ENCODE measurements at regions of chr17 and their contacts with region 1.

Region 1: GRCh38 chr17:75904749-75905521 is at the start of gene MRPL38:
- DNase-seq: peak; percentile 96 to 98 (median 96)
- ATAC-seq: peak; percentile 96
- H3K4me3 ChIP-seq: peak within 1 kb of the TSS; percentile 84 to 91
- H3K27ac ChIP-seq: peak within 1 kb of the TSS; percentile 82 to 96 (median 92)
- H3K4me1 ChIP-seq: peaks cover 19% of the 10 kb centered on the region
- H3K27me3 ChIP-seq: no peaks in the 10 kb centered on the region
- CTCF ChIP-seq: peak; percentile 97 to 100 (median 99)
- POLR2A ChIP-seq: peak; percentile 67 to 85 (median 69)
- total RNA-seq, gene MRPL38: 47.7 to 77.8 TPM

Region 2: DNA sequence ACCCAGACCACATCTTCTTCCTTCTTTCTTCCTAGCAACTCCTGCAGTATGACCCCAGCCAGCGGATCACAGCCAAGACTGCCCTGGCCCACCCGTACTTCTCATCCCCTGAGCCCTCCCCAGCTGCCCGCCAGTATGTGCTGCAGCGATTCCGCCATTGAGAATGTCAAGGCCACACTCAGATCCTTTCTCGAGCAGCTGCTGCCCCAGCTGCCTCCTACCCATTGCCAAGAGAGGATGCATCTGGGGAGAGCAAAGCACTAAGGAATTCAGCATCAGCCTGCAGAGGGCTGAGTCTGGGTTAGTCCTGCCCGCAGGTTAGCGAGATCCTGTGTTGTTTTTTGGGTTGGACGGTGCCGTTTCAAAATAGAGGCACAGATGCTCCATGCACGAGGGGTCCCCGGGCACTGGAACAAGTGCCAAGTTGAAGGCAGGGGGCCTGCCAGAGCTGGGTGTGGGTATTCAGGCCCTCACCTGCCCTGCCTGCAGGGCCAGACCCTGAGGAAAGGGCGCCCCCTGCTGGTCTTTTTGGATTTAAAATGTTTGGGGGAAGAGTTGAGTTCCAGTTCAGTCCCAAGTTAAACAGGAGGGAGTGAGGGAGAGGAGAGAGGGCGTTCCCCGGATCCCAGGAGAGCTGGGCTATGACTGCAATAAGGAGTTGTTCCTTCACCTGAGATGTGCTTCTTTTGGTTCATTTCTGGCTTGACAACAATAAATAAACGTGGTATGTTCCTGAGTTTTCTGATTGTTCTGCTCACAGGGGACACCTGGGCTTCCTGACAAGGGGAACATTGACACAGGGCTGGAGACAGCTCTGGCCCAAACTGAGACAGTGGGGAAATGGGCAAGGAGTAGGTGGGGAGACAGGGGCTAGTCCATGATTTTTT is 100.6 kb after region 1 on chr17:
- intact Hi-C with region 1: loop called (anchors 5 kb)
- DNase-seq: peak; percentile 79 to 89 (median 85)
- ATAC-seq: peak; percentile 62
- H3K4me3 ChIP-seq: no peak overlapping the region
- H3K27ac ChIP-seq: peak overlapping the region; percentile 13 to 85 (median 52)
- H3K4me1 ChIP-seq: peaks cover 48% of the 10 kb centered on the region
- H3K27me3 ChIP-seq: no peaks in the 10 kb centered on the region
- CTCF ChIP-seq: peak; percentile 68 to 85 (median 80)
- POLR2A ChIP-seq: no peak

Region 3: GRCh38 chr17:76296186-76296585 is 391.3 kb after region 1 on chr17:
- intact Hi-C with region 1: loop called (anchors 10 kb)
- DNase-seq: no peak
- ATAC-seq: no peak
- H3K4me3 ChIP-seq: no peak overlapping the region
- H3K27ac ChIP-seq: no peak overlapping the region
- H3K4me1 ChIP-seq: no peaks in the 10 kb centered on the region
- H3K27me3 ChIP-seq: no peaks in the 10 kb centered on the region
- CTCF ChIP-seq: no peak
- POLR2A ChIP-seq: no peak

Measured in body of pancreas (tissue), 4 donors.